Posterior vena cava (tissue), 2 donors: ENCODE measurements at regions of chr10 and their contacts with region 1.

Region 1: GRCh38 chr10:61943674-61944410 is 42.3 kb downstream of the ARID5B start:
- DNase-seq: no peak

Region 2: DNA sequence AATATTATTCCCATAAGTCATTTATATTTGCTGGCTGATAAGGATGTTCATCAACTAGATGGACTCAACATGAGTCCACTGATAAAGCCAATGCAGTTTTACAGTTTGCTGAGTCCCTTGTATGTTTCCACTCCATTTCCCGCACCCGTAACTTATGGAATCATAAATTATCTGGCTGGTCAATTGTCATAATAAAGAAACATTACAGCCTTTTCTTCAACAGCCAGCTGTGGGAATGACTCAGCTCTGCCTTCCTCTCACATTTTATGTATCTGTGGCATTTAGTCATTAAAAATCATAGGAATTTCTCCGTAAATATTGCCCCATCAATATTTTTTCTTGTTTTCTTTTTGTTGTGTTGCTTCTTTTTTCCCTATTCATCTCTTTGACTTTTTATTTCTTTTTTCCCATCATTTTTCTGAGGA is 468.4 kb before region 1 on chr10:
- intact Hi-C with region 1: no loop called
- DNase-seq: no peak

Region 3: DNA sequence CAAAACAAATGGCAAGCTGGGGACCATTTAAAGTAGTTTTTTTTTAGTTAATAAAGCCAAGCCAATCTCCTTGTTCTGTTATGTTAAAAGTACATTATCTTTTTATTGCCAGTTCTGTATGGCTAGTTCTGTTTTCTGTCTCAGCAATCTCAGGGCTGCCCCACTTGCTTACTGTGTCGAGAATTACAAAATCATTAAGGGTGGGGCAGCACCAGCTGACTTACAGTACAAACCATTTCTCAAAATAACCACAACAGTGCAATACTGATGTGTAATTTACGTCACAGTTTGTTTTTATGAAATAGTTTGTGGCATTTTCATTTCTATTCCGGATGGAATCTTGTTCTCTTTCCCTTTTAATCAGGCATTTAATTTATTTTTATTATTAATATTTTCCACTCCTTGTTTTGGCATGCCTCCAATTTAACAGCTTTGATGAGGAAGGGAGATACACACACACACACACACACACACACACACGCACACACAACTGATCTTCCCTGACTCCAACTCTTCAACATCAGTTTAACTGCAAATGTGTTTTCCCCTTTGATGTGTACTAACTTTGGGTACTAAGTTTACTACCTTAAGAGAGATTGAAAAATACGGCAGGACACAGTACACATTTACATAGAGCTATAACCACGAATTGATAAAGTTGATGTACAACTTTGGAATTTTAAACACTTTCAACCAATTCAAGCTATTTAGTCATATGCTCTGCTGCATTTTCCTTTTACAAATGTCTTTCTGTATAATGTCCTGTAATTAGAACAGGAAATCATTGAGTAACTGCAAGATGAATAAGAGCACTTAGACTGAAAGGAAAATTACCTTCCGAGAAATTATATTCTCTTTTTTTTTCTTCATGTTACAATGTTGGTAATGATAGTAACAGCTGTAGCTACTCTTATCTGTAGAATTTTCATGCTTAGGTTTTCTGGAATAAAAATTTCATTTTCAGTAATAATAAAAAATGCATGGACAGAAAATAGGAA is 49.1 kb after region 1 on chr10:
- intact Hi-C with region 1: loop called in 1 of 2 experiments (anchors 5 kb)
- DNase-seq: no peak